Ovary (tissue), 10 donors: ENCODE measurements at regions of chr15 and their contacts with region 1.

Region 1: GRCh38 chr15:60737217-60737616 is 258.3 kb upstream of the ICE2 start:
- DNase-seq: no peak
- H3K4me3 ChIP-seq: no peak overlapping the region
- H3K27ac ChIP-seq: no peak overlapping the region
- H3K4me1 ChIP-seq: no peaks in the 10 kb centered on the region
- H3K27me3 ChIP-seq: no peaks in the 10 kb centered on the region
- CTCF ChIP-seq: no peak
- EP300 ChIP-seq: no peak
- POLR2A ChIP-seq: no peak

Region 2: GRCh38 chr15:59208850-59209249 is 1528.4 kb before region 1 on chr15:
- intact Hi-C with region 1: loop called in 1 of 4 experiments (anchors 5 kb)
- DNase-seq: no peak
- H3K4me3 ChIP-seq: no peak overlapping the region
- H3K27ac ChIP-seq: no peak overlapping the region
- H3K4me1 ChIP-seq: no peaks in the 10 kb centered on the region
- H3K27me3 ChIP-seq: no peaks in the 10 kb centered on the region
- CTCF ChIP-seq: no peak
- EP300 ChIP-seq: no peak
- POLR2A ChIP-seq: no peak

Region 3: DNA sequence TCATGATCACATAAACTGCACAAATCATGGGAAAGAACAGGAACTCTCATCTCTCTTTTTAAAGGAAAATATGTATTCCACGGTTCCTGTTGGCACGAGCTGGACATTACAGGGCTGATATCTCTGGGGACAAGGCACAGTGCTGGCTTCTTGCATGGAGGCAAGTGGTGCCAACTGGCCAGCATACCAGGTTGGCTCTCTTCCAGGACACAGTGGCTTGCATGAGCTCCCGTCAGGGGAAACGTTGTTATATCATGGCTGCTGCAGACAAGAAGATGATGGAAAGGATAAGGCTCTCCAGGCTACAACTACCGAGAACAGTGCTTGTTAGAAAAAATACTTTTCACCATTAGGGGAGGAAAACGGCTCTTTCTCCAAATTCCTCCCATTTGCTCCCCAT is 208.0 kb after region 1 on chr15:
- intact Hi-C with region 1: no loop called
- DNase-seq: peak in 2 of 5 donors; percentile 32 to 36
- H3K4me3 ChIP-seq: no peak overlapping the region
- H3K27ac ChIP-seq: no peak overlapping the region
- H3K4me1 ChIP-seq: peaks cover 7% of the 10 kb centered on the region
- H3K27me3 ChIP-seq: no peaks in the 10 kb centered on the region
- CTCF ChIP-seq: no peak
- EP300 ChIP-seq: no peak
- POLR2A ChIP-seq: no peak